Colonic mucosa (tissue), 4 donors: ENCODE measurements at regions of chr3 and their contacts with region 1.

Region 1: GRCh38 chr3:69439643-69440270 is 53.9 kb upstream of the FRMD4B start:
- DNase-seq: no peak
- H3K4me3 ChIP-seq: no peak overlapping the region
- H3K27ac ChIP-seq: no peak overlapping the region
- H3K4me1 ChIP-seq: no peaks in the 10 kb centered on the region
- H3K27me3 ChIP-seq: no peaks in the 10 kb centered on the region
- CTCF ChIP-seq: peak; percentile 25

Region 2: GRCh38 chr3:69161587-69162307 is 278.0 kb before region 1 on chr3:
- intact Hi-C with region 1: no loop called
- DNase-seq: peak; percentile 30
- H3K4me3 ChIP-seq: no peak overlapping the region
- H3K27ac ChIP-seq: no peak overlapping the region
- H3K4me1 ChIP-seq: no peaks in the 10 kb centered on the region
- H3K27me3 ChIP-seq: no peaks in the 10 kb centered on the region
- CTCF ChIP-seq: peak; percentile 95

Region 3: GRCh38 chr3:69181592-69182211 is 258.1 kb before region 1 on chr3:
- intact Hi-C with region 1: no loop called
- DNase-seq: no peak
- H3K4me3 ChIP-seq: no peak overlapping the region
- H3K27ac ChIP-seq: peak overlapping the region; percentile 50
- H3K4me1 ChIP-seq: peaks cover 12% of the 10 kb centered on the region
- H3K27me3 ChIP-seq: no peaks in the 10 kb centered on the region
- CTCF ChIP-seq: no peak

Region 4: DNA sequence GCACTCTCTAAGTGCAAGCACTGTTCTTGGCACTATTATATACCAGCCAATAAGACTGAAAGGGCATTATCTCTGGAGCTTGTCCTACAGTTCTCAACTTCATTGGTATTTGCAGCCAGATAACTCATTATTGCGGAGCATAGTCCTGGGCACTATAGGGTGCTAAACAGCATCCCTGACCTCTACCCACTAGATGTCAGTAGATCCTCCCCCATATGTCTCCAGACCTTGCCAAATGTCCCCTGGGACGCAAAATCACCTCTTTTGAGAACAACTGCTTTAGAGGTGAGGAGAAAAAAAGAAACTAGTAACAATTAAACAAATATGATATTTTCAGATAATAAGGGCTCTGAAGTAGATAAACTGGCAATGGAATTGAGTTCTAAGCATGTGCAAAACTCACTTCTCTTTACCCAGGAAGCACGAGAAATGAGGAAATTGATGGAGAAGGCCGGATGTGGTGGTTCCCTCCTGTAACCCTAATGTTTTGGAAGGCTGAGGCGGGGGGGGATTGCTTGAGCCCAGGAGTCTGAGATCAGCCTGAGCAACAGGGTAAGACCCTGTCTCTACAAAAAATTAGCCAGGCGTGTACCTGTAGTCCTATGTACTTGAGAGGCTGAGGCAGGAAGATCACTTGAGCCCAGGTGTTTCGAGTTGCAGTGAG is 115.3 kb before region 1 on chr3:
- intact Hi-C with region 1: no loop called
- DNase-seq: no peak
- H3K4me3 ChIP-seq: no peak overlapping the region
- H3K27ac ChIP-seq: no peak overlapping the region
- H3K4me1 ChIP-seq: no peaks in the 10 kb centered on the region
- H3K27me3 ChIP-seq: no peaks in the 10 kb centered on the region
- CTCF ChIP-seq: no peak

Region 5: GRCh38 chr3:69490235-69490634 is 50.5 kb after region 1 on chr3:
- intact Hi-C with region 1: no loop called
- DNase-seq: no peak
- H3K4me3 ChIP-seq: no peak overlapping the region
- H3K27ac ChIP-seq: no peak overlapping the region
- H3K4me1 ChIP-seq: no peaks in the 10 kb centered on the region
- H3K27me3 ChIP-seq: no peaks in the 10 kb centered on the region
- CTCF ChIP-seq: no peak

Region 6: GRCh38 chr3:69665026-69665737 is 225.4 kb after region 1 on chr3:
- intact Hi-C with region 1: loop called (anchors 10 kb)
- DNase-seq: peak; percentile 34
- H3K4me3 ChIP-seq: no peak overlapping the region
- H3K27ac ChIP-seq: no peak overlapping the region
- H3K4me1 ChIP-seq: no peaks in the 10 kb centered on the region
- H3K27me3 ChIP-seq: no peaks in the 10 kb centered on the region
- CTCF ChIP-seq: no peak